ENCODE measurements at regions of chr5 and their contacts with region 1.

Region 1: GRCh38 chr5:131460867-131461572 is 174.0 kb downstream of the RAPGEF6 start:
- DNase-seq: no peak
- H3K4me3 ChIP-seq: no peak overlapping the region
- H3K27ac ChIP-seq: no peak overlapping the region
- H3K27me3 ChIP-seq: no peaks in the 10 kb centered on the region
- CTCF ChIP-seq: no peak

Region 2: GRCh38 chr5:131263648-131264450 is 197.2 kb before region 1 on chr5 and contains the start of gene CDC42SE2:
- intact Hi-C with region 1: no loop called
- DNase-seq: peak; percentile 68 to 92 (median 76)
- H3K4me3 ChIP-seq: peak within 1 kb of the TSS; percentile 73 to 99 (median 93)
- H3K27ac ChIP-seq: peak within 1 kb of the TSS; percentile 78 to 98 (median 94)
- H3K27me3 ChIP-seq: no peaks in the 10 kb centered on the region
- CTCF ChIP-seq: peak in 20 of 56 donors; percentile 5 to 57 (median 16)
- total RNA-seq, gene CDC42SE2: 34.8 to 102 (median 68.6) TPM

Region 3: GRCh38 chr5:131441184-131441583 is 19.8 kb before region 1 on chr5:
- intact Hi-C with region 1: loop called in 1 of 2 experiments (anchors 2 kb)
- DNase-seq: no peak
- H3K4me3 ChIP-seq: no peak overlapping the region
- H3K27ac ChIP-seq: peak overlapping the region in 2 of 59 donors; percentile 9 to 38
- H3K27me3 ChIP-seq: no peaks in the 10 kb centered on the region
- CTCF ChIP-seq: no peak

Measured in dorsolateral prefrontal cortex (tissue), 120 donors.